GM23248 (cell line): ENCODE measurements at regions of chr6 and their contacts with region 1.

Region 1: DNA sequence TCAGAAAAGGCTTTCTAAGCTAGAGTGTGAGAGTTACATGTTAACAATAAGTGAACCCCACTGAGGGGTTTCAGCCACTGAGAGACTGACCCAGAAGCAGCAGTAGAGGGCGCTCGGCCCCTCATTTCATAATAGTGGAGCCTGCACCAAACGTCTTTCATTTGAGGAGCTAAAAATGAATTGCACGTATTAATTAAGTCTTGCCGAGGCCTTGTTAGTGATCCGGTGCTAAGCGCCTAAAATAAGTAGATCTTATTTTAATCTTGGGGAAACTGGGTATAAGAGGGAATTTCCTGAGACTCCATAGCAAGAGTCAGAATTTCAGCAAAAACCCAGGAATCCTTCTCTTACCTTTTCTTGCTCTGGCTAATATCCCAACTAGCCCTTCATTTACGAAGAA is 209.7 kb downstream of the FARS2 start:
- DNase-seq: peak; percentile 83
- H3K4me3 ChIP-seq: 0 out of 2 replicates have a peak overlapping the region, but pooled peaks have one; percentile 5
- H3K27ac ChIP-seq: no peak overlapping the region
- H3K4me1 ChIP-seq: peaks cover 32% of the 10 kb centered on the region
- H3K27me3 ChIP-seq: no peaks in the 10 kb centered on the region

Region 2: GRCh38 chr6:5995949-5996713 is 525.1 kb after region 1 on chr6:
- in situ Hi-C with region 1: loop called (anchors 10 kb)
- DNase-seq: peak; percentile 92
- H3K4me3 ChIP-seq: peak overlapping the region; percentile 99
- H3K27ac ChIP-seq: peak overlapping the region; percentile 87
- H3K4me1 ChIP-seq: peaks cover 22% of the 10 kb centered on the region
- H3K27me3 ChIP-seq: no peaks in the 10 kb centered on the region